Activated B cell treated with CpG ODN at 0.5 μM for 24 hours (primary cell): ENCODE measurements at regions of chr1 and their contacts with region 1.

Region 1: DNA sequence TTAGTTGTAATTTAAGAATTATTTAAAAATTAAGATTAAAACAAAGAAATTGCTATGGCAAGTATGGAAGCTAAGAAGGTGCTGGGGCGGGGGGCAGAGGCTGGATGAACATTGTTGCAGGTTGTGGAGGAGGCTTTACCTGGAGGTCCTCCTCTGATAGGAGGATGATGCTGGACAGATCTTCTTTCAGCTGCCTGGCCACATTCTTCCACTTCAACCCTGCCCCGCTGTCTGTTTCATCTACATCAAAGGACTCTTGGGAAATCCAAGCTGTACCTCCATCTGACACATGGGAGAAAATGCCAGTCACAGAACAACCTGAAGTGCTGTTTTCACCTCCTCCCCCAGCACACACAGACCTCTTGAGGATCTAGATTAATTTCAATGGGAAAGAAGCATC is 5.3 kb downstream of the DFFA start:
- DNase-seq: no peak
- ATAC-seq: no peak
- H3K4me3 Mint-ChIP-seq: no peak overlapping the region
- H3K27ac Mint-ChIP-seq: no peak overlapping the region
- H3K4me1 Mint-ChIP-seq: peaks cover 14% of the 10 kb centered on the region
- H3K27me3 Mint-ChIP-seq: no peaks in the 10 kb centered on the region
- CTCF ChIP-seq: no peak

Region 2: GRCh38 chr1:10598389-10598702 is 131.3 kb after region 1 on chr1:
- CTCF ChIA-PET with region 1: no interaction called
- POLR2A ChIA-PET with region 1: no interaction called
- intact Hi-C with region 1: no loop called
- DNase-seq: no peak
- ATAC-seq: no peak
- H3K4me3 Mint-ChIP-seq: no peak overlapping the region
- H3K27ac Mint-ChIP-seq: no peak overlapping the region
- H3K4me1 Mint-ChIP-seq: peaks cover 6% of the 10 kb centered on the region
- H3K27me3 Mint-ChIP-seq: no peaks in the 10 kb centered on the region
- CTCF ChIP-seq: no peak

Region 3: DNA sequence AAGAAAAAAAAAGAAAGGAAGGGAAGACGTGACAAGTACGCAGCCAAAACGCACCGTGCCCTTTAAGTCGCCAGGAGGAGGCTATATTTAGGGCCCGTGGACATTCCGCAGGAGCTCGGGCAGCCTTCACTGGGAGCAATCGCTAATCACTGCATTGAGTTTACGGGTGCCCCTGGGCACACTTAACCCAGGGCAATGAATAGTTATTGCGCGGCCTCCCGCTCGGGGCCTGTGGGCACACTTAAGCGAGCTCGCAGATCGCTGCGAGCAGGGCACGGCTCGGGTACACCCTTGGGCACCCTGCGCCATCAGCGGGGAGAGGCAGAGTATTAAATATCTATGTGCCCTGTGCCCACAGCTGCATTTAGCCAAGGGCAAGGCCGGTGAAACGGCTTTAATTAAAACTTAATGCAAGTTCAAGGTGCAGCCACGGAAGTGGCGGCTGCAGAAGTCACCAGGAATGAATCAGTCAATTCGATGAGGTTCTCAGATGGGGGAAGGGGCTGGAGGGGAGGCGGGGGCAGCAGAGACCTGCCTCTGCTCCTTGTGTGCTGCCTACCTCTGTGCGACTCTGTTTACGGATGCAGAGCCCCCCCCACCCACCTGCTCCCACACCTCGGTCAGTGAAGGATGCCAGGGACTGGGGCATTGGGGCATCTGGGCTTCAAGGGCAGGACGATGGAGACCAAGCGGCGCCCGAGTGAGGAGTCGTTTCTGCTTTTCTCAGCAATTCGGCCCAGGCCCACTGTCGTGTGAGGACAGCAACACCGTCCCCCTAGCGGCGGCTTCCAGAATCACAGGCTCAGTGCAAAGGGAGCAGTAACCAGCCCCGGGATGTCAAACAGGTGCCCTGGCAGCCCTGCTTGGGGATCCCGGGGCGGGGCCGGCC is 493.6 kb after region 1 on chr1:
- CTCF ChIA-PET with region 1: no interaction called
- POLR2A ChIA-PET with region 1: interaction called, 11 read pairs
- intact Hi-C with region 1: no loop called
- DNase-seq: peak; percentile 72
- ATAC-seq: peak; percentile 92
- H3K4me3 Mint-ChIP-seq: no peak overlapping the region
- H3K27ac Mint-ChIP-seq: no peak overlapping the region
- H3K4me1 Mint-ChIP-seq: peaks cover 10% of the 10 kb centered on the region
- H3K27me3 Mint-ChIP-seq: peaks cover 26% of the 10 kb centered on the region
- CTCF ChIP-seq: no peak